ENCODE measurements at regions of chr5 and their contacts with region 1.

Region 1: DNA sequence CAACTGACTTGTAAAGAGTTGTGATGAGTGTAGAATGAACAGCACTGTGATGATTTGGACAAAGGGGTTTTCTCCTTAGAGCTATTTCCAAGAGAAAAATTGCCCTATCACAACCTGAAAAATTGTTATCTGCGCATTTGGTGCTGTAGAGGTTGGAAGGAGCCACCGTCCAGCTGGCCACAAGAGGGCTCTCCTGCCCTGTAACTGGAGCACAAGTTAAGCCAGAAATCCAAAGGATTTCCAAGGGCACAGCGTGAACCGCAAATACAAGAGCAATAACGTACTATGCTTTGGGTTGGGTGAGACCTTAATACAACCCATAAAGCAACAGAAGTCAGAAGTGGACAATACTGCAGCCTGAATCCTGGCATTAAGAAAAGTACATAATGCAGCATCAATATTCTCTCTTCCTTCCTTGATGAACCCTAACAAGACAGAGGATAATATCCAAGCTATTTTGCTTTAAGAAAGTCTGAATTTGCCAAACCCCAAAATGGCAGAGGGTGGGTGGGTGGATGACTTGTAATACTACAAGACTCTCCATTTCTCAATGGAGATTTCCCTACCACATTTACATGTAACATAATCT is 56.8 kb upstream of the SMIM32 start:
- DNase-seq: no peak
- H3K4me3 ChIP-seq: no peak overlapping the region
- H3K27ac ChIP-seq: no peak overlapping the region
- H3K4me1 ChIP-seq: no peaks in the 10 kb centered on the region
- H3K27me3 ChIP-seq: peaks cover 0 to 21% (median 0%) of the 10 kb centered on the region in 4 donors
- CTCF ChIP-seq: peak in 5 of 6 experiments; percentile 61 to 78 (median 66)
- POLR2A ChIP-seq: no peak

Region 2: DNA sequence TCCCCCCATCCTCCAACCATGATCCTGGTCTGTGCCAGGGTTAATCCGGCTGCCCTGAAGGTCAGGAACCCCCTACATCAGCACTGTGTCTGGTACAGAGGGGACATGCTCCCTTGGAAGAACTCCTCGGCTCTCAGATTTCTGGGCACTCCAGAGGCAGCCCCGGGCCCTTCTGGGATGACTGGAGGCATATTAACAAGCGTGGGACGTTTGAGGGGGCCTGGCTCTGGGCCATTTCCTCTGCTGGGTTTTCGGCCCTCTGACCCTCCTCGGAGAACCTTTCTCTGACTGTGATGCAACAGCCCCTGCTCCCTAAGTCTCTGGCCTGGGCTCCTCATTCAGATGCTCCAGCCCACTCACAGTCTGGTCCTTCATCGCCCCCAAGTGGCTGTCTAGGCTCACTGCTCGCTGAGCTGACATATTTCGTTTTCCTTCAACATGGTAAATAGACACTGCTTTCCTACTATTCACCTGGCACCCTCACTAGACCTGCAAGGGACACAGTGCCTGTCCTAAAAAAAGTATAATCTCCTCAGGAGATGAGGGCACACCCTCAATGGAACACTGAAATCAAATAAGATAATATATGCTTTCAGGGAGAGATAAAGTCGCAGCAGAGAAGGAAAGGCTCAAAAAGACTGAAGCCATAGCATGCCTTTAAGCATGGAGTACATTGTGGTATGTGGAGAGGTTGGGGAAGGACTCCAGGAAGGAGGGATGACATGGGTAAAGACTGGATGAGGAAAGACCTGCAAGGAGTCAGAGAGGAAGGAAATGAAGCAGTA is 520.3 kb after region 1 on chr5:
- intact Hi-C with region 1: loop called (anchors 10 kb)
- DNase-seq: no peak
- H3K4me3 ChIP-seq: no peak overlapping the region
- H3K27ac ChIP-seq: no peak overlapping the region
- H3K4me1 ChIP-seq: no peaks in the 10 kb centered on the region
- H3K27me3 ChIP-seq: peaks cover 0 to 9% (median 0%) of the 10 kb centered on the region in 4 donors
- CTCF ChIP-seq: peak; percentile 11 to 79 (median 58)
- POLR2A ChIP-seq: no peak

Measured in esophagus squamous epithelium (tissue), 5 donors.